Activated CD4-positive, alpha-beta T cell treated with anti-CD3 and anti-CD28 coated beads for 36 hours (primary cell): ENCODE measurements at regions of chr10 and their contacts with region 1.

Region 1: DNA sequence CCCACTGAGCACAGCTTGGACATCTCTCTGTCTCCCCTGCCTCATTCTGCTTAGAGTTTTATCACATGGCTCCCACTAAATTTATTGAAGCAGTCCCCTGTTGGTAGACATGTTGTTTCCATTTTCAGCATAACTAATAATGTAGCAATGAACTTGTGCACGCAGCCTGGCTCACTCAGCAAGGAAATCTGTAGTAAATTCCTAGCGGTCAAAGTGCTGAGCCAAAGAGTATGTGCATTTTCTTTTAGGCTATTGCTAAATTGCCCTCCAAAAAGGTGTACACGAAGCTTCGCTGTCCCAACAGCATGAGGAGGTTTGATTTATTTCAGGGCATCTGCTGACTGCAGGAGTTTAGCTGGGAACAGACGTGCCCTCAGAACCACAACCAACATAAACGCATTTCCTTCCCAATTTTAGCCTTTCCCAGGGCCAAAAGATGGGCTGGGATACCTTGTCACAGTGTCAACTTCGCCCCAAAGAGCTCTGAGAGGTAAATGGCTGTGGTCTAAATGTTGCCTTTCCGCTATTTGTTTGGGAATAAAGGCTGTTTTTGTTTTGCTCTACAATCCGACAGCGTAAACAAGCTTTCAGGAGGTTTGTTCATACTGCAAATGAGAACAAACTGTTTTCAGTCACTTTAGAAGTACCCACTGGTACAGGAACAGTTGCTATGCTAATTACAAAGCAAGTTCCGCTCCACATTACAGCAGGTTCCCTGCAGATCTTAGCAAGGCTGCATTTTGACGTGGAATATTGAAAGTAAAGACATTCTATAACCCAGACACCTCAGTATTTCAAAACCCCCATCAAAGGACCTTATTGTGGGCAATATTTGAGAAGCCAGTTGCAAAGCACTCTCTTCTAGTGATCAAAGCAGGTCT is 16.8 kb downstream of the VSIR start:
- DNase-seq: no peak
- ATAC-seq: peak; percentile 82
- H3K4me3 Mint-ChIP-seq: peak overlapping the region; percentile 48
- H3K27ac Mint-ChIP-seq: peak overlapping the region; percentile 90
- H3K4me1 Mint-ChIP-seq: peaks cover 90% of the 10 kb centered on the region
- H3K27me3 Mint-ChIP-seq: no peaks in the 10 kb centered on the region

Region 2: GRCh38 chr10:71634531-71635164 is 121.9 kb before region 1 on chr10:
- CTCF ChIA-PET with region 1: no interaction called
- POLR2A ChIA-PET with region 1: no interaction called
- intact Hi-C with region 1: no loop called
- DNase-seq: no peak
- ATAC-seq: no peak
- H3K4me3 Mint-ChIP-seq: no peak overlapping the region
- H3K27ac Mint-ChIP-seq: no peak overlapping the region
- H3K4me1 Mint-ChIP-seq: peaks cover 4% of the 10 kb centered on the region
- H3K27me3 Mint-ChIP-seq: no peaks in the 10 kb centered on the region

Region 3: GRCh38 chr10:71740069-71740468 is 16.5 kb before region 1 on chr10:
- CTCF ChIA-PET with region 1: interaction called, 26 read pairs
- POLR2A ChIA-PET with region 1: no interaction called
- intact Hi-C with region 1: no loop called
- DNase-seq: no peak
- ATAC-seq: no peak
- H3K4me3 Mint-ChIP-seq: no peak overlapping the region
- H3K27ac Mint-ChIP-seq: peak overlapping the region; percentile 97
- H3K4me1 Mint-ChIP-seq: peaks cover 100% of the 10 kb centered on the region
- H3K27me3 Mint-ChIP-seq: no peaks in the 10 kb centered on the region

Region 4: DNA sequence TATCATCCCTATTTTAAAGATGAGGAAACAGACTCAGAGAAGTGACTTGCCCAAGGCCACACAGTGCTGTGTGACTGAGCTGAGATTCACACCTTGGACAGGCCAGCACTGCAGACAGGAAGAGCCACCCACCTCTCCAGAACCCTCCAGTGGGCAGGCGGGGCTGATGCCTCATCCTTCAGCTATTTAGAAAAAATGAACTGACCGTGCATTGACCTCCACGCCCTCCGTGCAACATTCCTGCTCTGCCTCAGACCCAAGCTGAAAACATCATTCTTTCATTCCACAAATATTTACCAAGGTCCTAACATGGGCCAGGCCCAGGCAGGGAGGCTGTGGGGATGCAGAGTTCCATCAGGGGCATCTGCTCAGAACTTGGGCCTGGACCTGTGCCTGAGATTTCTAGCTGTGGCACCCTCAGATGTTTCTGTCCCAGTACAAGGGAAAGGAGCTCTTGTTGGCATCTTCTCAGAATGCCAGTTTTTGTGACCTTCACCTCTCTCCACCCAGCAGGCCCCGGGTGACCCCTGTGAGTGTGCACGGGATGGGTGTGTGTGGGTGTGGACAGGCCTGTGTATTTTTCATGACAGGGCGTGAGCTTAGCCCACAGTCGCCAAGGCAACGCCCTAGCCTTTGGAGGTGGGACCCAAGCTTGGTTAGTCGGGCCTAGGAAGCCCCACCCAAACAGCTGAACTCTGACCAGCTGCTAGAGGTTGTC is 10.3 kb after region 1 on chr10:
- CTCF ChIA-PET with region 1: interaction called, 41 read pairs
- POLR2A ChIA-PET with region 1: interaction called, 14 read pairs
- intact Hi-C with region 1: loop called (anchors 1 kb)
- DNase-seq: no peak
- ATAC-seq: no peak
- H3K4me3 Mint-ChIP-seq: no peak overlapping the region
- H3K27ac Mint-ChIP-seq: peak overlapping the region; percentile 92
- H3K4me1 Mint-ChIP-seq: peaks cover 84% of the 10 kb centered on the region
- H3K27me3 Mint-ChIP-seq: no peaks in the 10 kb centered on the region